ENCODE measurements at regions of chr5 and their contacts with region 1.

Region 1: GRCh38 chr5:96336351-96336985 is 96.6 kb downstream of the PCSK1 start:
- DNase-seq: peak; percentile 80 to 93
- H3K4me3 ChIP-seq: no peak overlapping the region
- H3K27ac ChIP-seq: peak overlapping the region; percentile 54 to 76 (median 72)
- H3K4me1 ChIP-seq: peaks cover 32 to 66% (median 55%) of the 10 kb centered on the region in 4 donors
- H3K27me3 ChIP-seq: no peaks in the 10 kb centered on the region
- CTCF ChIP-seq: peak in 5 of 7 experiments; percentile 72 to 89 (median 84)
- EP300 ChIP-seq: no peak
- POLR2A ChIP-seq: no peak

Region 2: GRCh38 chr5:95773335-95774059 is 563.0 kb before region 1 on chr5:
- intact Hi-C with region 1: no loop called
- DNase-seq: no peak
- H3K4me3 ChIP-seq: no peak overlapping the region
- H3K27ac ChIP-seq: peak overlapping the region in 3 of 5 donors; percentile 5 to 71 (median 14)
- H3K4me1 ChIP-seq: peaks cover 0 to 27% (median 9%) of the 10 kb centered on the region in 4 donors
- H3K27me3 ChIP-seq: no peaks in the 10 kb centered on the region
- CTCF ChIP-seq: no peak
- EP300 ChIP-seq: no peak
- POLR2A ChIP-seq: no peak

Region 3: GRCh38 chr5:95861221-95861857 is 475.1 kb before region 1 on chr5:
- intact Hi-C with region 1: loop called (anchors 10 kb)
- DNase-seq: peak; percentile 65 to 80
- H3K4me3 ChIP-seq: no peak overlapping the region
- H3K27ac ChIP-seq: peak overlapping the region; percentile 49 to 90 (median 69)
- H3K4me1 ChIP-seq: peaks cover 39 to 89% (median 64%) of the 10 kb centered on the region in 4 donors
- H3K27me3 ChIP-seq: no peaks in the 10 kb centered on the region
- CTCF ChIP-seq: no peak
- EP300 ChIP-seq: no peak
- POLR2A ChIP-seq: no peak